HEK293T (cell line): ENCODE measurements at regions of chr6 and their contacts with region 1.

Region 1: GRCh38 chr6:33958526-33959333 is 154.9 kb upstream of the MLN start:
- DNase-seq: no peak

Region 2: GRCh38 chr6:33975661-33976385 is 17.1 kb after region 1 on chr6:
- CTCF ChIA-PET with region 1: no interaction called
- POLR2A ChIA-PET with region 1: no interaction called
- DNase-seq: no peak

Region 3: DNA sequence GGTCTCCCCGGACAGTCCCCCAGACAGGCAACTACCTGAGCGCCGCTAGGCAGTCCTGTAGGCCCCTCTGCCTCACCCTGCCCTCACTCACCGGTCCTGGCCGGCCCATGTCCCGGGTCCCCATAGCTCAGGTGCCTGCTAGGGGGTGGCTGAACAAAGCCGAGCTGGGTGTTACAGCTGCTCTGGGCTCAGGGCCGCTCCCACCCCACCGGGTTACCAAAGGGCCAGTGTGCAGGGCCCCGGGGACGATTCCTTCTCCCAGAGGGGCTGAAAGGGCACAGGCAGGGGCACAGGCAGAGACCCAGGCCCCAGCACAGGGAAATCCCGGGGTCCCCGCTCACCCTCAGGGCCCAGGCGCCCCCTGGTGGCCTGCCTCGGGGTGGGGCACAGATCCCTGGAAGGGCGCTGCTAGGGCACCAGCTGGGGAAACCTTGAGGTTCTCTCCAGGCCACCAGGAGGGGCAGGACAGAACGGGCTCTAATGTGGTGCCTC is 68.8 kb after region 1 on chr6:
- CTCF ChIA-PET with region 1: interaction called, 11 read pairs
- POLR2A ChIA-PET with region 1: no interaction called
- DNase-seq: peak; percentile 74